Right ventricle myocardium superior (tissue), 1 donor: ENCODE measurements at regions of chr18 and their contacts with region 1.

Region 1: GRCh38 chr18:74342416-74343043 is 26.9 kb downstream of the C18orf63 start:
- DNase-seq: no peak
- ATAC-seq: peak; percentile 57

Region 2: GRCh38 chr18:74081966-74082741 is 260.4 kb before region 1 on chr18:
- intact Hi-C with region 1: no loop called
- DNase-seq: peak; percentile 49
- ATAC-seq: peak; percentile 76

Region 3: GRCh38 chr18:74241426-74241825 is 101.1 kb before region 1 on chr18:
- intact Hi-C with region 1: loop called (anchors 2 kb)
- DNase-seq: no peak
- ATAC-seq: no peak

Region 4: GRCh38 chr18:74436158-74436769 is 93.7 kb after region 1 on chr18:
- intact Hi-C with region 1: no loop called
- DNase-seq: no peak
- ATAC-seq: no peak